B cell (primary cell): ENCODE measurements at regions of chr17 and their contacts with region 1.

Region 1: GRCh38 chr17:78360371-78361224 is 721 bp upstream of the SOCS3 start:
- DNase-seq: peak; percentile 88
- ATAC-seq: peak; percentile 28
- H3K4me3 ChIP-seq: peak overlapping the region in 4 of 5 experiments; percentile 41 to 76 (median 64)
- H3K4me3 Mint-ChIP-seq: peak overlapping the region; percentile 91
- H3K27ac ChIP-seq: peak overlapping the region; percentile 8 to 66
- H3K27ac Mint-ChIP-seq: peak overlapping the region; percentile 90
- H3K4me1 ChIP-seq: peaks cover 39 to 52% of the 10 kb centered on the region in 2 donors
- H3K4me1 Mint-ChIP-seq: peaks cover 39% of the 10 kb centered on the region
- H3K27me3 ChIP-seq: peaks cover 0 to 35% (median 7%) of the 10 kb centered on the region in 4 experiments
- H3K27me3 Mint-ChIP-seq: peaks cover 20% of the 10 kb centered on the region
- CTCF ChIP-seq: peak; percentile 92

Region 2: GRCh38 chr17:78272181-78272913 is 88.3 kb before region 1 on chr17:
- CTCF ChIA-PET with region 1: interaction called, 4 read pairs
- POLR2A ChIA-PET with region 1: no interaction called
- intact Hi-C with region 1: loop called (anchors 1 kb)
- DNase-seq: peak; percentile 80
- ATAC-seq: peak; percentile 70
- H3K4me3 ChIP-seq: no peak overlapping the region
- H3K4me3 Mint-ChIP-seq: peak overlapping the region; percentile 68
- H3K27ac ChIP-seq: no peak overlapping the region
- H3K27ac Mint-ChIP-seq: peak overlapping the region; percentile 83
- H3K4me1 ChIP-seq: peaks cover 4 to 33% of the 10 kb centered on the region in 2 donors
- H3K4me1 Mint-ChIP-seq: peaks cover 43% of the 10 kb centered on the region
- H3K27me3 ChIP-seq: peaks cover 0 to 23% (median 10%) of the 10 kb centered on the region in 4 experiments
- H3K27me3 Mint-ChIP-seq: peaks cover 25% of the 10 kb centered on the region
- CTCF ChIP-seq: no peak

Region 3: GRCh38 chr17:78313735-78314648 is 46.6 kb before region 1 on chr17:
- CTCF ChIA-PET with region 1: interaction called, 13 read pairs
- POLR2A ChIA-PET with region 1: interaction called, 4 read pairs
- intact Hi-C with region 1: loop called (anchors 2 kb)
- DNase-seq: peak; percentile 72
- ATAC-seq: peak; percentile 73
- H3K4me3 ChIP-seq: peak overlapping the region in 4 of 5 experiments; percentile 11 to 56 (median 50)
- H3K4me3 Mint-ChIP-seq: peak overlapping the region; percentile 68
- H3K27ac ChIP-seq: no peak overlapping the region
- H3K27ac Mint-ChIP-seq: no peak overlapping the region
- H3K4me1 ChIP-seq: peaks cover 35 to 41% of the 10 kb centered on the region in 2 donors
- H3K4me1 Mint-ChIP-seq: peaks cover 31% of the 10 kb centered on the region
- H3K27me3 ChIP-seq: peaks cover 0 to 33% (median 5%) of the 10 kb centered on the region in 4 experiments
- H3K27me3 Mint-ChIP-seq: peaks cover 11% of the 10 kb centered on the region
- CTCF ChIP-seq: no peak

Region 4: DNA sequence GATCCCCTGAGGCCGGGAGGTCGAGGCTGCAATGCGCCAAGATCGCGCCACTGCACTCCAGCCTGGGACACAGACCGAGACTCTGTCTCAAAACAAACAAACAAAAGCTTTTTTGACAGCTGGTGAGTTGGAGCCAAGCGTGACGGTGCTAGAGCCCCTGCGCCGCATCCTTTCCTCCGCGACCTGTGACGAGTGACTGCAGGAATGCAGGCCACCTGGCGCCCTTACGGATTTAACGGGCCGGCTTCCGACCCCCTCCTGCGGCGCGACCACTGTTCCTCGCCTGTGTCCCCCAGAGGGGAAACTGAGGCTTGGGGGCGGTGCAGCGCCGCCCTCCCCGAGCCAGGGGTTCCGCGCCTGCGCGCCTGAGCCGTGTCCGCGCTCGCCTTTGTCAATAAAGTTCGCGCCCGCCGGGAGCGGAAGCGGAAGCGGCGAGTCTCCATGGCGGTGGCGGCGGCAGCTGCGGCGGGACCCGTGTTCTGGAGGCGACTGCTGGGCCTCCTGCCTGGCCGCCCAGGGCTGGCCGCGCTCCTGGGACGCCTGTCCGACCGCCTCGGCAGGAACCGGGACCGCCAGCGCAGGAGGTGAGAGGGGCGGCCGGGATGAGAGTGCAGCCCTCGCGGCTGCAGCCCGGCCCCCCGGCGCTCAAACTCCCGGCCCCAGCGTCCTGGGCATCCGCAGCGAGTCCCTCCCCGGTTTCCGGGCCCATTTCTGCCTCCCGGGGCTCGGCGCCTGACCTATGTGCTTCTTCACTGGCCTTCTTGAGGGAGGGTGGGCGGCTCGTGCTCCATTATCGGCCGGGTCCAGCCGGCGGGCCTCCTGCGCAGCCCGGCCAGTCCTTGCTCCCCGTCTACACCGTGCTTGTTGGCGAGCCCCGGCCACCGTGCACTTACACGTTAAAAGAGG is 17.9 kb after region 1 on chr17 and contains the start of gene PGS1:
- CTCF ChIA-PET with region 1: interaction called, 18 read pairs
- POLR2A ChIA-PET with region 1: no interaction called
- intact Hi-C with region 1: loop called (anchors 1 kb)
- DNase-seq: peak; percentile 88
- ATAC-seq: peak; percentile 78
- H3K4me3 ChIP-seq: peak within 1 kb of the TSS; percentile 75 to 93 (median 87)
- H3K4me3 Mint-ChIP-seq: peak within 1 kb of the TSS; percentile 93
- H3K27ac ChIP-seq: peak within 1 kb of the TSS; percentile 46 to 87
- H3K27ac Mint-ChIP-seq: peak within 1 kb of the TSS; percentile 81
- H3K4me1 ChIP-seq: peaks cover 25 to 35% of the 10 kb centered on the region in 2 donors
- H3K4me1 Mint-ChIP-seq: peaks cover 36% of the 10 kb centered on the region
- H3K27me3 ChIP-seq: no peaks in the 10 kb centered on the region
- H3K27me3 Mint-ChIP-seq: no peaks in the 10 kb centered on the region
- CTCF ChIP-seq: no peak
- total RNA-seq, gene PGS1: 88.3 and 91.1 TPM in 2 replicates

Region 5: GRCh38 chr17:78412403-78412802 is 51.8 kb after region 1 on chr17:
- CTCF ChIA-PET with region 1: interaction called, 4 read pairs
- POLR2A ChIA-PET with region 1: interaction called, 12 read pairs
- intact Hi-C with region 1: no loop called
- DNase-seq: no peak
- ATAC-seq: no peak
- H3K4me3 ChIP-seq: no peak overlapping the region
- H3K4me3 Mint-ChIP-seq: no peak overlapping the region
- H3K27ac ChIP-seq: no peak overlapping the region
- H3K27ac Mint-ChIP-seq: peak overlapping the region; percentile 20
- H3K4me1 ChIP-seq: peaks cover 0 to 6% of the 10 kb centered on the region in 2 donors
- H3K4me1 Mint-ChIP-seq: peaks cover 24% of the 10 kb centered on the region
- H3K27me3 ChIP-seq: no peaks in the 10 kb centered on the region
- H3K27me3 Mint-ChIP-seq: no peaks in the 10 kb centered on the region
- CTCF ChIP-seq: no peak